ENCODE measurements at regions of chr4 and their contacts with region 1.

Region 1: DNA sequence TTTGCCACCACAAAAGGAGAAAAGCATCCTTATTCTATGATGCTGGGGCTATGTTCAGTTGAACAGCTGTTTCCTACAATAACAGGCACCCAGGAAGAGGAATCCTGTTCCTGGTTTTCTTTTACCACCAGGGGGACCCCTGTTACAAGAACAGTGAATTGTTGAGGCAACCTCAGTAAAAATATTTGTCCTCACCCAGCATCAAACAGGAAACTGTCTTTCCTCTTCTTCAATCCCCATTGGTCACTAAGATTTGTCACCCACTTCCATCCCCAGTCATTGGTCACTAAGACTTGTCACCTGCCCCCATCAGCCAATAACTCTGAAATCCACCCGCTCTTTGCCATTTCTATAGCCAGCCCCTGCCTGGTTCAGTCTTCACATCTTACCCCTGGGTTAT is 143.5 kb upstream of the GALNT7 start:
- DNase-seq: peak; percentile 77
- H3K4me3 ChIP-seq: no peak overlapping the region
- H3K27ac ChIP-seq: no peak overlapping the region
- H3K4me1 ChIP-seq: no peaks in the 10 kb centered on the region
- H3K27me3 ChIP-seq: peaks cover 53% of the 10 kb centered on the region

Region 2: DNA sequence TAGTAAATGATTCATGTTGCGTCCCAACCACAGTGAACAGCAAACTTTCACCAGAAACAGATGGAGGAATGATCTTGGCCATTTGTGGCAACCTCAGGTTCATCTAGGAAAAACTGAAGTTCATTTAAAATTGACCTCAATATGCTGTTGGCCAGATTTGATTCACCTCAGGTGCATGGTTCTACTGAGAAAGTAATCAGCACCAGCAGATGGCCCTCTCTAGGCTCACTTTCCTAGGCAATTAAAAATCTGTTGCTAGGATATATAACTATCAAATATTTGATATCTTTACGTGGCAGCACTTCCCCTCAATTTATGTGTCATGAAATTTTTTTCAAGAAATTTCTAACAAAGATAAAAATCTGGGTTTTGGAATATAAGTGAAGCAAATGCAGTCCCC is 867.2 kb before region 1 on chr4:
- in situ Hi-C with region 1: no loop called
- DNase-seq: no peak
- H3K4me3 ChIP-seq: no peak overlapping the region
- H3K27ac ChIP-seq: no peak overlapping the region
- H3K4me1 ChIP-seq: no peaks in the 10 kb centered on the region
- H3K27me3 ChIP-seq: no peaks in the 10 kb centered on the region

Region 3: DNA sequence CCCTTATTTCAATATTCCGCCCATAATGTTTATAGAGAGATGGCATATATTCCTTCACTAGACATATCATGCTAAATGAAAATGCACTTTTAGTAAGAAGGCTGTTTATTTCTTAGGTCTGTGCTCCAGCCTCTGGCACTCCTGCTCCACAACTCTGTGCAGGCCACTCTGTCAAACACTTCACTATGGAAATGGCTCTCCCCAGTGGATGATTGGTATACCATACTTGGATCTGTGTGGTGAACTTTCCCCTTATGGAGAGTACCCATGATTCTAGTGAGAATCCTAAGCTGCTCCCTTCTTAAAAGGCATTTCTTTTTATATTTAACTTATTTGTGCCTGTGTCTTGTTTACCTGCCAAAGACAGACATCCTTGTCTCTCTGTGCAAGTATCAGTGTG is 336.6 kb before region 1 on chr4:
- in situ Hi-C with region 1: no loop called
- DNase-seq: no peak
- H3K4me3 ChIP-seq: no peak overlapping the region
- H3K27ac ChIP-seq: no peak overlapping the region
- H3K4me1 ChIP-seq: 0 out of 2 replicates have a peak, but pooled peaks cover 4% of the 10 kb centered on the region
- H3K27me3 ChIP-seq: no peaks in the 10 kb centered on the region

Region 4: DNA sequence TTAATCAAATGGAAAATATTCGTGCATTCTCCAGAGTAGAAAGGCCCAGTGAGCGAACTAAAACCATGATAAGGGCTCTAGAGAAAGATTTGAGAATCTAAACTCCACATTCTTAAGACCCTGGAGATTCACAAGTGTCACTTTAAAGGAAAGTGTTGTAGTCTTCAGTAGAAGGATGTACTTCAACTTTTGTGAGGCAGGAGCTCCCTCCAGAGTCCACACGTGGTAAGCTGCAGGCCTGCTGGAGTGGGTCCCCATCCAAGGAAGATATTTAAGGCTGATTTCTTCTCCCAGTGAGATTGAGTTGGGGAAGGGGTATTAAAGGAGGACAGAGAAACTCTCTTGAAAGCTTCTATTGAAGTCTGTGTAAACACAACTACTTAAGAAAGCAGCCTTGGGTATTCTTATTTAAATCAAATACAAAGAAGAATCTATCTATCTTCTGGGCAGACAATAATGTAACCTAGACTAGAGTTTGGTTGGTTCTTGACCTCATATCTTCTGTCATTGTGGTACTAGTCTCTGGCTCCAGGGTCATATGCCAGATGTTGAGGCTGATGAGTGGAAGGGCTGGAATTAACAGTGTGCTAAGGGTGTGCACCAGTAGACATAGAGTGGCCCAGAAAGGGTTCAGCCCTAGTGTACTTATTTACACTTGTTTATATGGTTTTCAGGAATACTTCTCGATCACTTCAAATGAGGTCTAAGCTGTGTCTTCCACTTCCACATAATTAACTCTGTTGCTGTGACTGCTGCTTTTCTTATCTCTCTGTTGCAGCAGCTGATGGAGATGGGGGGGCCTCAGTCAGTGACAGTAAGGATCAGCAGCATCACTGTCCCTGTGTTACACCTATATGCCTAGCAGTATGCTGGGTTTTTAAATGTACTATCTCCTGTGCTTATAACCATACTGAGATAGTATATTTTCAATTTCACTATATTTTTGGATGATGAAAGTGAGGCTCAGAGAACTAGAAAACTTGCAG is 232.9 kb after region 1 on chr4:
- in situ Hi-C with region 1: loop called (anchors 10 kb)
- DNase-seq: peak; percentile 78
- H3K4me3 ChIP-seq: no peak overlapping the region
- H3K27ac ChIP-seq: no peak overlapping the region
- H3K4me1 ChIP-seq: no peaks in the 10 kb centered on the region
- H3K27me3 ChIP-seq: peaks cover 38% of the 10 kb centered on the region

Measured in GM23248 (cell line).